ENCODE measurements at regions of chr20 and their contacts with region 1.

Region 1: GRCh38 chr20:41693136-41693979 is 75.2 kb upstream of the CHD6 start:
- DNase-seq: peak; percentile 71
- H3K4me3 Mint-ChIP-seq: peak overlapping the region; percentile 78
- H3K27ac Mint-ChIP-seq: peak overlapping the region; percentile 32
- H3K4me1 Mint-ChIP-seq: peaks cover 17% of the 10 kb centered on the region
- H3K27me3 Mint-ChIP-seq: peaks cover 30% of the 10 kb centered on the region
- CTCF ChIP-seq: peak; percentile 24

Region 2: GRCh38 chr20:41669708-41670263 is 23.6 kb before region 1 on chr20:
- CTCF ChIA-PET with region 1: interaction called, 10 read pairs
- POLR2A ChIA-PET with region 1: interaction called, 4 read pairs
- intact Hi-C with region 1: no loop called
- DNase-seq: no peak
- H3K4me3 Mint-ChIP-seq: no peak overlapping the region
- H3K27ac Mint-ChIP-seq: no peak overlapping the region
- H3K4me1 Mint-ChIP-seq: peaks cover 6% of the 10 kb centered on the region
- H3K27me3 Mint-ChIP-seq: peaks cover 27% of the 10 kb centered on the region
- CTCF ChIP-seq: no peak

Region 3: DNA sequence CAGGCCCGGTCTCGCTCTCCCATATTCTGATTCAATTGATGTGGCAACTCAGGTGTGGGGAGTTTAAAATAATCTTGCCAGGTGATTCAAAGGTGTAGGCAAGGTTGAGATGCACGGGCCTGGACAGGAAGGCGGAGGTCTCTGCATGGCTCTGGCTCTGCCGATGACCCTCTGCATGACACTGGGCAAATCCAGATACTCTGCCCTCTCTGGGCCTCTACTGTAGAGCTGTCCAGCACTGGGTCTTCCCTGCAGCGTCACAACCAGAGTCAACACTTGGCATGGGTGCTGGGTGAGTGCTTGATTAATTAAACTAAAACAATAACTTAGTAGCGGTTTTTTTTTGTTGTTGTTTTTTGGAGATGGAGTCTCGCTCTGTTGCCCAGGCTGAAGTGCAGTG is 30.1 kb after region 1 on chr20:
- CTCF ChIA-PET with region 1: interaction called, 95 read pairs
- POLR2A ChIA-PET with region 1: no interaction called
- intact Hi-C with region 1: no loop called
- DNase-seq: no peak
- H3K4me3 Mint-ChIP-seq: no peak overlapping the region
- H3K27ac Mint-ChIP-seq: no peak overlapping the region
- H3K4me1 Mint-ChIP-seq: no peaks in the 10 kb centered on the region
- H3K27me3 Mint-ChIP-seq: no peaks in the 10 kb centered on the region
- CTCF ChIP-seq: no peak

Region 4: GRCh38 chr20:43187476-43188233 is 1494.3 kb after region 1 on chr20:
- CTCF ChIA-PET with region 1: interaction called, 14 read pairs
- POLR2A ChIA-PET with region 1: no interaction called
- intact Hi-C with region 1: loop called (anchors 1 kb)
- DNase-seq: peak; percentile 58
- H3K4me3 Mint-ChIP-seq: no peak overlapping the region
- H3K27ac Mint-ChIP-seq: no peak overlapping the region
- H3K4me1 Mint-ChIP-seq: peaks cover 8% of the 10 kb centered on the region
- H3K27me3 Mint-ChIP-seq: peaks cover 24% of the 10 kb centered on the region
- CTCF ChIP-seq: peak; percentile 84

Measured in MCF 10A (cell line).